ENCODE measurements at regions of chr4 and their contacts with region 1.

Region 1: DNA sequence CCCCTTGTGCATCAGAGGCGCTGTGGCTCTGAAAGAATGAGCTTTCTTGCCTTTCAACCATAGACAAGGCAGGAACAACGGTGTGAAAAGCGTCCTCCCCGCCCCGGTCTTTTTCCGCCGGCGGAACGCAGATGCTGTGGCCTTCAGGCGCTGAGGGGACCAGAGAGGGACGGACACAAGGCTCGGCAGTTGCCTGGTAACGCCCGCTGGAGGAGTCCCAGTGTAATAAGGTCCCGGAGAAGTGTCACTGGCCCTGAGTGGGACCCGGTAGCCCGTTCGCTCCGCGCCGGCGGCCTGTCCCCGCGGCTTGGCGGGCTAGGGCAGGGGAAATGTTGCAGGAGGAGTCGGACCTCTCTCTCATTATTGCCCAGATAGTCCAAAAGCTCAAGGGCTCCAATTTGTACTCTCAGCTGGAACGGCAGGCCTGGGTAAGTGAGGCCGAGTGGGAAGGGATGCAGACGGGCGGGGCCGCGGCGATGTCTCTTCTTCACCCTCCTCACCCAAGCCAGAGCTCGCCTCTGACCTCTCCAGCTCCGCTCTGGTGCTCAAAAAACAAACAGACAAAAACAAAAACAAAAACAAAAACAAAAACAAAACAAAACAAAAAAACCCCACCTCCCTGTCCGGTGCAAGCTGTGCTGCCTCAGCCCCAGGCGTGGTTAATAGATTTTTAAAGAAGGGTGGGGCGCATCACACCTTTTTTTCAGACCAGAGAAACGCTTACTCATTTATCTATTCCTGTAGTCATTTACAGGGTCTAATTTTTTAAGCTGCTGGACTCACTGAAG is at the start of gene TBC1D19:
- DNase-seq: peak; percentile 71 to 90 (median 86)
- H3K4me3 ChIP-seq: peak within 1 kb of the TSS; percentile 87
- H3K4me3 Mint-ChIP-seq: peak within 1 kb of the TSS; percentile 96 to 100 (median 97)
- H3K27ac ChIP-seq: peak within 1 kb of the TSS; percentile 99
- H3K27ac Mint-ChIP-seq: peak within 1 kb of the TSS; percentile 97 to 100 (median 99)
- H3K4me1 ChIP-seq: peaks cover 12% of the 10 kb centered on the region
- H3K4me1 Mint-ChIP-seq: peaks cover 35 to 48% (median 42%) of the 10 kb centered on the region in 3 donors
- H3K27me3 ChIP-seq: no peaks in the 10 kb centered on the region
- H3K27me3 Mint-ChIP-seq: peaks cover 4 to 8% of the 10 kb centered on the region in 2 donors
- total RNA-seq, gene TBC1D19: 4.4 to 6.3 TPM

Region 2: DNA sequence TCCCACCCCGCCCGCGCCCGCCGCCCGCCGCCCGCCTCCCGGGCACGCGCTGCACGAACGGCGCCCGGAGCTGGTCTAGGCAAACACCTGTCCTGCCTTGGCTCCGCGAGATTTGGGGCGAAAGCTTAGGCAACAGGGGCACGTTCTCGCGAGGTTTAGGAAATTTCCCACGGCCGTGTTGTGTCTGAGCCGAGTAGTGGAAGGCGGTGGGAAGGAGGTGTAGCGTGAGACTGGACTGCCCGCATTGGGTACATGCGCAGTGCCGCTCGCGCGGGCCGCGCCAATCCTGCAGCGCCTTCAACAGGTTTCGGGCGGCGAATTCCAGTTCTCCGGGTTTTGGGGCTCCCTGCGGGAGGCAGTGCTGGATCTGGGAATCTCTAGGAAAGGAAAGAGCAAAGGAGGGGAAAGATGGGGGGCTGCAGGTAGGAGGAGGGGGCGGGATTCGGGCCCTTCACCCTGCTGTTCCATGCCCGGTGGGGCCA is 264.6 kb before region 1 on chr4:
- CTCF ChIA-PET with region 1: no interaction called
- POLR2A ChIA-PET with region 1: interaction called, 10 read pairs
- DNase-seq: peak; percentile 90 to 98 (median 95)
- H3K4me3 ChIP-seq: peak overlapping the region; percentile 98
- H3K4me3 Mint-ChIP-seq: peak overlapping the region; percentile 92 to 100 (median 98)
- H3K27ac ChIP-seq: peak overlapping the region; percentile 89
- H3K27ac Mint-ChIP-seq: peak overlapping the region; percentile 98 to 100 (median 99)
- H3K4me1 ChIP-seq: peaks cover 17% of the 10 kb centered on the region
- H3K4me1 Mint-ChIP-seq: peaks cover 34 to 40% (median 34%) of the 10 kb centered on the region in 3 donors
- H3K27me3 ChIP-seq: no peaks in the 10 kb centered on the region
- H3K27me3 Mint-ChIP-seq: peaks cover 0 to 4% of the 10 kb centered on the region in 2 donors

Region 3: GRCh38 chr4:26522478-26522877 is 61.6 kb before region 1 on chr4:
- CTCF ChIA-PET with region 1: no interaction called
- POLR2A ChIA-PET with region 1: no interaction called
- DNase-seq: no peak
- H3K4me3 ChIP-seq: no peak overlapping the region
- H3K4me3 Mint-ChIP-seq: no peak overlapping the region
- H3K27ac ChIP-seq: no peak overlapping the region
- H3K27ac Mint-ChIP-seq: no peak overlapping the region
- H3K4me1 ChIP-seq: no peaks in the 10 kb centered on the region
- H3K4me1 Mint-ChIP-seq: no peaks in the 10 kb centered on the region
- H3K27me3 ChIP-seq: no peaks in the 10 kb centered on the region
- H3K27me3 Mint-ChIP-seq: peaks cover 6 to 29% of the 10 kb centered on the region in 2 donors

Region 4: DNA sequence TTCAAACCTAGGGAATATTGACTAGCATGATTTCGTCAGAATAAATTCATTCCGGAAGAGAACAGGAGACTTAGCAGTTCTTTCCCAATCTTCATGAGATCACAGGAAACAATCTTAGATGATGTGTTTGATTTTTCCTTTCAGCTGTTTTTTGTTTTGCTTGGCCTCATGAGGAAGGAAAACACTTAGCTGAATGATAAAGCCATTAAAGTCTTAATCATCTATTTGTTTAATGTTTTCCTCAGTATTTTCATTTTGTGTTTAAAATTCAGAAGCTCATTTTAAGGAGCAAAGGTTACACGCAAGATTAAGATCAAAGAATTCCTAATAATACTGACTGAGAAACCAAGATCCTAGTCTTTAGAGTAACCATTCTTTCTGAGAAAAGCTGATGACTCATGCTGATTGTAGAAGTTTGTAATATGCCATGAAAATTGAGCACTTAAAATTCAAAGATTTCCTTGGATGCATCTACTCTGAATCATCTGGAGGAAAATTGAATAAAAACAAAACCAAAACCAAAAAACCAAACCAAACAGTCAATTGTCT is 15.5 kb before region 1 on chr4:
- CTCF ChIA-PET with region 1: no interaction called
- POLR2A ChIA-PET with region 1: no interaction called
- DNase-seq: no peak
- H3K4me3 ChIP-seq: no peak overlapping the region
- H3K4me3 Mint-ChIP-seq: no peak overlapping the region
- H3K27ac ChIP-seq: no peak overlapping the region
- H3K27ac Mint-ChIP-seq: no peak overlapping the region
- H3K4me1 ChIP-seq: no peaks in the 10 kb centered on the region
- H3K4me1 Mint-ChIP-seq: no peaks in the 10 kb centered on the region
- H3K27me3 ChIP-seq: peaks cover 5% of the 10 kb centered on the region
- H3K27me3 Mint-ChIP-seq: peaks cover 15 to 50% of the 10 kb centered on the region in 2 donors